Caco-2 (cell line): ENCODE measurements at regions of chr1 and their contacts with region 1.

Region 1: DNA sequence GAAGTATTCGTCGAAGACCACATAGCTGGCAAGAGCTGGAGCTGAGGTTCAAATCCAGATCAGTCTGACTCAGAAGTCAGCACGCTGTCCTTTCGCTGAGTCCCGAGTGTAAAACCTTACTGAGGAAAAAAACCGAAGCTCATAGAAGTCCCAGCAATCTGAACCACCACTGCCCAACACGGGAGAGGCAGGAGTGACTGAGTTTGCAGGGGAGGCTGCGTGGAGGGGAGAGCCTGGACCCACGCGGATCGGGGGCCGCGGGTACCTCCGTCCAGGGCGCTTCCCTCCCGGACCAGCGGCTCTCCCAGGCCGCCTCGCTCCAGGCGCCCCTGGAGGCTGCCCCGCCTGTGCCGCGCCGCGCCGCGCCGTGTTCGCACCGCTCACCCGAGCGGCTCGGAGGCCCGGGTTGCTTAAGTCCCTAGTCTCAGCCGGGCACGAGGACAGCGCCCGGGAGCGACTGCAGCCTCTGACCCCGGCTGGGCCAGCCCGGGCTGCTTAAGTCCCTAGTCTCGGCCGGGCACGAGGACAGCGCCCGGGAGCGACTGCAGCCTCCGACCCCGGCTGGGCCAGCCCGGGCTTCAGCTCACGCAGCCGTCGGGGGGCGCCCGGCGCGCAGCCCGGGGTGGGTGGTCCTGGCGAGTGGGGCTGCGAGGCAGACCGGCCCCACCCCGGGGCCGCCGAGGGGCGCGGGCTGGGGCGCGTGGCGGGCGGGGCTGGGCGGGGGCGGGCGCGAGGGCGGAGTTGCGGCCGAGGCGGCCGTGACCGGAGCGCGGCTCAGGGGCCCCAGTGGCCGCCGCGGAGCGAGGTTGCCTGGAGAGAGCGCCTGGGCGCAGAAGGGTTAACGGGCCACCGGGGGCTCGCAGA is at the start of gene ADAMTSL4:
- DNase-seq: peak; percentile 74 to 85
- H3K4me3 ChIP-seq: peak within 1 kb of the TSS; percentile 82
- H3K4me3 Mint-ChIP-seq: peak within 1 kb of the TSS; percentile 80
- H3K27ac Mint-ChIP-seq: peak within 1 kb of the TSS; percentile 92
- H3K4me1 ChIP-seq: peaks cover 44% of the 10 kb centered on the region
- H3K4me1 Mint-ChIP-seq: peaks cover 22% of the 10 kb centered on the region
- H3K27me3 ChIP-seq: no peaks in the 10 kb centered on the region
- H3K27me3 Mint-ChIP-seq: no peaks in the 10 kb centered on the region
- CTCF ChIP-seq: peak in 1 of 2 experiments; percentile 12
- total RNA-seq, gene ADAMTSL4: 16.1 and 17.6 TPM in 2 replicates

Region 2: DNA sequence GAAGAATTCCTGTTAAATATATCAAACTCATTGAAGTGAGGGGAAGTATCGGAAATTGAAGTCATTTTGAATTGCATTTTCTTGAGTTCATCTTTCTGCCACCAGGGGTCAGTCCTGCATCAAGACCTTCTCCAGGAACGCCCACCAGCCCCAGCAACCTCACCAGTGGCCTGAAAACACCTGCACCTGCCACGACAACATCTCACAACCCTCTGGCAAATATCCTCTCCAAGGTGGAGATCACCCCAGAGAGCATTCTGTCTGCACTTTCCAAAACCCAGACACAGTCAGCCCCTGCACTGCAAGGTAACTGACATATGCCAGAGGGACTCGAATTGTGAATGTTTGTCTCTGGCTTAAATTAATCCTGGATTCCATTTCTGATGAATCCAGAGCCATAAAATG is 84.4 kb before region 1 on chr1:
- CTCF ChIA-PET with region 1: no interaction called
- POLR2A ChIA-PET with region 1: no interaction called
- intact Hi-C with region 1: loop called (anchors 1 kb)
- DNase-seq: peak; percentile 67 to 78
- H3K4me3 ChIP-seq: no peak overlapping the region
- H3K4me3 Mint-ChIP-seq: no peak overlapping the region
- H3K27ac Mint-ChIP-seq: no peak overlapping the region
- H3K4me1 ChIP-seq: no peaks in the 10 kb centered on the region
- H3K4me1 Mint-ChIP-seq: no peaks in the 10 kb centered on the region
- H3K27me3 ChIP-seq: no peaks in the 10 kb centered on the region
- H3K27me3 Mint-ChIP-seq: no peaks in the 10 kb centered on the region
- CTCF ChIP-seq: peak; percentile 71 to 79

Region 3: DNA sequence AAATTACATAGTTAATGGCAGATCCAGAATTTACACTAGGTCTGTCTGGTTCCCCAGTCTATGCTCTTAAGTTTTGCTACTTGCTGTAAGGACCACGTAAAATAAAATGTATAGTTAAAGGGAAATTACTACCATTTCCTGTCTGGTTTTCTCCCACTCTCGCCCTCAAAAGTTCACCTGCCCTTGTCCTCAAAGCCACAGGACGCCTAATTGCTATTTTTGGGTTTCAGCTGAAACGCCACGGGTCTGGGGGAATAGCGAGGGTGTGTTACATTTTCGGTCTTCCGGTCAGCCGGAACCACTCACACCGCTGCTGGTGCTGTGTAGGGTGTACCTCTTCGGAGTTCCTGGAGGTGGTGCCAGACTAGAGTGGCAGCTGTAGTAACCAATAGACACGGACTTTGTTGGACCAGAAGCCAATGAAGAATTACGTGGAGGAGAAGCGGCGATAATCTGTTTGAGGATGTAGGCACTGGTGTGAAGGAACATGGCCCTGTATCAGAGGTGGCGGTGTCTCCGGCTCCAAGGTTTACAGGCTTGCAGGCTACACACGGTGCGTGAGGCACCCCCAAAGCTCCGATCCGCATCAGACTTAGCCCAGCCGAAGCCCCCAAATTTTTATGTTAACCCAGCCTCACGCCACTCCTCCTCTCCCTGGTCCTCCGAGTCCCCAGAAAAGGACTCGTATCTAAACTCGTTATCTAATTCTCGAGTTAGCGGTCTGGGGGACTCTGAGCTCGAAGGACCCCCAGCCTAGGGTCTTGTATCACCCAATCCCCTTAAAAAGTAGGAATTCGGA is 61.7 kb before region 1 on chr1 and contains the start of gene TARS2:
- CTCF ChIA-PET with region 1: no interaction called
- POLR2A ChIA-PET with region 1: no interaction called
- intact Hi-C with region 1: loop called (anchors 5 kb)
- DNase-seq: peak; percentile 97 to 99
- H3K4me3 ChIP-seq: peak within 1 kb of the TSS; percentile 78
- H3K4me3 Mint-ChIP-seq: peak within 1 kb of the TSS; percentile 80
- H3K27ac Mint-ChIP-seq: peak within 1 kb of the TSS; percentile 85
- H3K4me1 ChIP-seq: no peaks in the 10 kb centered on the region
- H3K4me1 Mint-ChIP-seq: peaks cover 8% of the 10 kb centered on the region
- H3K27me3 ChIP-seq: no peaks in the 10 kb centered on the region
- H3K27me3 Mint-ChIP-seq: no peaks in the 10 kb centered on the region
- CTCF ChIP-seq: peak in 1 of 2 experiments; percentile 35
- total RNA-seq, gene TARS2: 26.8 and 30.6 TPM in 2 replicates

Region 4: GRCh38 chr1:150532868-150533302 is 16.0 kb before region 1 on chr1:
- CTCF ChIA-PET with region 1: interaction called, 11 read pairs
- POLR2A ChIA-PET with region 1: interaction called, 8 read pairs
- intact Hi-C with region 1: loop called (anchors 1 kb)
- DNase-seq: no peak
- H3K4me3 ChIP-seq: no peak overlapping the region
- H3K4me3 Mint-ChIP-seq: peak overlapping the region; percentile 66
- H3K27ac Mint-ChIP-seq: peak overlapping the region; percentile 91
- H3K4me1 ChIP-seq: peaks cover 55% of the 10 kb centered on the region
- H3K4me1 Mint-ChIP-seq: peaks cover 45% of the 10 kb centered on the region
- H3K27me3 ChIP-seq: no peaks in the 10 kb centered on the region
- H3K27me3 Mint-ChIP-seq: no peaks in the 10 kb centered on the region
- CTCF ChIP-seq: no peak